RWPE1 (cell line): ENCODE measurements at regions of chr4 and their contacts with region 1.

Region 1: DNA sequence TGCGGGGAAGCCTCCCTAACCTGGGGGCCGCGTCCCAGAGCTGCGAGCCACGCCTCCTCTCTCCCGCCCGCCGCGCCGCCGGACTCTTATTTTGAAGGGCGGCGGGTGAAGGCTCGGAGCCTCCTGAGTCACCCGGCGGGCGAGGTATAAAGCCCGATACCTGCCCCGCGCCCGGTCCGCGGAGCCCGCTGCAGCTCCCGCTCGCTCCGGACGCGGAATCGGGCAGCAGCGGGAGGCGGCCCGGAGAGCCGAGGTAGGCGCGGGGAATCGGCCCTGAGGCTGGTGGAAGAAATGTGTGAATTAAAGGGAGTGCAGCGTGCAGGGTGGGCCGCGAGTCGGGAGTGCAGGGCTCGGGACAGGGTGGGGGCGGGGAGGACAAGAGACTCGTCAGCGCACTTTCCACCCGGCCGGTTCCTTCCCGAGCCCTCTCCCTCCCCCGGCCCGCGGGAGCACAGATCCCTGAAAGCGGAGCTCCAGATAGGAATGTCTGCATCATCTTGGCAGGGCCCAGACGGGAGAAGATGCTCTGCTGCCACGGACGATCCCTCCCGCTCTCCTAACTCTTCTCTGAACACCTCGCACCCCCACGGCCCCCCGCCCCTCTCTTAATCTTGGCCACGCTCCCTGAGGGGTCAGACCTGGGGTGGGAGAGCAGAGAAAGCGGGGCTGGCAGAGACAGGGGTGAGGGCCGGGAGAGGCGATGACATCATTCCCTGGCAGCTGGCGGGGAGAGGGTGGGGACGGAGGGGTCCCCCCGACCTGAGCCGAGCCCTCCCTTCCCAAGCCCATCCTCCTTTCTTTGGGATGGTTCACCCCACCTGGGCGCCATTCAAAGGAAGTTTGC is 177.9 kb downstream of the CBR4 start:
- DNase-seq: peak; percentile 87
- H3K27ac ChIP-seq: peak overlapping the region; percentile 92
- CTCF ChIP-seq: no peak

Region 2: GRCh38 chr4:168361365-168362024 is 470.6 kb before region 1 on chr4:
- CTCF ChIA-PET with region 1: no interaction called
- POLR2A ChIA-PET with region 1: no interaction called
- DNase-seq: no peak
- H3K27ac ChIP-seq: no peak overlapping the region
- CTCF ChIP-seq: no peak

Region 3: GRCh38 chr4:168585168-168586091 is 246.7 kb before region 1 on chr4:
- CTCF ChIA-PET with region 1: interaction called, 10 read pairs
- POLR2A ChIA-PET with region 1: no interaction called
- DNase-seq: peak; percentile 74
- H3K27ac ChIP-seq: no peak overlapping the region
- CTCF ChIP-seq: peak; percentile 78

Region 4: GRCh38 chr4:168859888-168860694 is 27.9 kb after region 1 on chr4:
- CTCF ChIA-PET with region 1: no interaction called
- POLR2A ChIA-PET with region 1: no interaction called
- DNase-seq: no peak
- H3K27ac ChIP-seq: peak overlapping the region; percentile 30; the same call in 1 of the 2 replicates
- CTCF ChIP-seq: no peak

Region 5: DNA sequence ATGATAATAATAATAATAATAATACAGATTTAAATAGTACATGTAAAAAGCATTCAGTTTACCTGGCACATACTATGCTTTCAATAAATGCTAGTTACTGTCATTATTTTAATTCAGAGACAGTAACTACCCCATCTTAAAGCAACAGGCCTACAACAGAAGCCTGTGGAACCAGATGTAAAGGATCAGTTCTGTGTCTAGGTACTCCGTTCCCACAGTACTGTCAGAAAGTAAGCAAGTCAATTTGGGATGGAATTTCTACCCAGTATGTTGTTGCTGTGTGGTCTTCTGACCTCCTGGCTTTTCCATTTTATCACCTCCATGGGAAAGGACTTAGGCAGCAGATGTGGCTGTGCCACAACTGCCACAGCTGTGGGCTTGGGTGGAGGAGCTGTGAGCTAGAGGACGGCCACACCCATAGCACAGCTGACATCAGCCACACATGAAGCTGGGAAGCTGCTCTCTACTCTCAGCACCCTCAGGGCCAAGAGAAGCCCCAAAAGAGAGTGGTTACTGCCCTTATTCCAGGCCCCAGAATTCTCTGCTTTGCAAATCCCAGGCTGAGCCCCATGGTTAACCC is 75.1 kb after region 1 on chr4:
- CTCF ChIA-PET with region 1: no interaction called
- POLR2A ChIA-PET with region 1: interaction called, 13 read pairs
- DNase-seq: no peak
- H3K27ac ChIP-seq: peak overlapping the region; percentile 29; the same call in 1 of the 2 replicates
- CTCF ChIP-seq: no peak